Stomach (tissue), 19 donors: ENCODE measurements at regions of chr18 and their contacts with region 1.

Region 1: GRCh38 chr18:3665780-3666525 is 216.0 kb downstream of the TGIF1 start:
- DNase-seq: peak; percentile 86 to 95
- H3K4me3 ChIP-seq: peak overlapping the region; percentile 7 to 22 (median 14)
- H3K27ac ChIP-seq: peak overlapping the region; percentile 71 to 95 (median 83)
- H3K4me1 ChIP-seq: peaks cover 0 to 32% (median 11%) of the 10 kb centered on the region in 4 donors
- H3K27me3 ChIP-seq: no peaks in the 10 kb centered on the region
- CTCF ChIP-seq: peak in 6 of 7 experiments; percentile 53 to 98 (median 96)
- EP300 ChIP-seq: no peak
- POLR2A ChIP-seq: no peak

Region 2: DNA sequence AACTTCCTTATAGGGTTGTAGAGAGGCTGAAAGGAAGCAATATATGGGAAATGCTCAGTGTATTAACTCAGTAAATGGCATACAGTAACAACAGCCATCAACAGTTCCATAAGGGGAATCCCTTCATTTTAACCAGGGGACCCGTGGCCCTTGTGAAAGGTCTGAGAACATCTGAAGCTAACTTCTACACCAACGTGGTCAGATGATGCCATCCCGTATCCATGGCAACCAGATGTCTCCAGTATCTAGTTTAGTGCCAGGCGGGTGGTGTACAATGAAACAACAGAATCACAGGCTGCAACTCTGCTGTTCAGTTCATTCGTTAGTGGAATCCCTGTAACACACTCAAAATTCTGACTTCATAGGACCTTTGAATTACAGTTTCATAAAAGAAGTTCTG is 53.6 kb before region 1 on chr18:
- intact Hi-C with region 1: loop called (anchors 10 kb)
- DNase-seq: no peak
- H3K4me3 ChIP-seq: no peak overlapping the region
- H3K27ac ChIP-seq: no peak overlapping the region
- H3K4me1 ChIP-seq: peaks cover 0 to under 1% (median 0%) of the 10 kb centered on the region in 4 donors
- H3K27me3 ChIP-seq: no peaks in the 10 kb centered on the region
- CTCF ChIP-seq: no peak
- EP300 ChIP-seq: no peak
- POLR2A ChIP-seq: no peak